ENCODE measurements at regions of chr6 and their contacts with region 1.

Region 1: DNA sequence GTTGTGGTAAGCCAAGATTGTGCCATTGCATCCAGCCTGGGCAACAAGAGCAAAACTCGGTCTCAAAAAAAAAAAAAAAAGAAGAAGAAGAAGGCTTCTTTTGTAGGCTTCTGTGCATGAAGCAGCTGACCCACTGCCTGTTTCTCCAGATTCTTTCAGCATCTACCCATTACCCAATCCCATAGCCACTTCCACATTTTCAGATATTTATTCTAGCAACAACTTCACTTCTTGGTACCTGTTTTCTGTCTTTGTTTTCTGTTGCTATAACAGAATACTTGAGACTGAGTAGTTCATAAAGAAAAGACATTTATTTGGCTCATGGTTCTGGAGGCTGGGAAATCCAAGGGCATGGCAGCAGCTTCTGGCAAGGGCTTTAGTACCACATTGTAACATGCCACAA is 95.3 kb upstream of the SGK1 start:
- DNase-seq: no peak
- H3K4me3 ChIP-seq: no peak overlapping the region
- H3K27ac ChIP-seq: no peak overlapping the region
- H3K4me1 ChIP-seq: no peaks in the 10 kb centered on the region
- H3K27me3 ChIP-seq: no peaks in the 10 kb centered on the region
- CTCF ChIP-seq: no peak
- POLR2A ChIP-seq: no peak

Region 2: GRCh38 chr6:134317471-134318131 is 95.6 kb before region 1 on chr6 and contains the start of gene SGK1:
- CTCF ChIA-PET with region 1: no interaction called
- POLR2A ChIA-PET with region 1: no interaction called
- dilution Hi-C with region 1: no loop called
- intact Hi-C with region 1: loop called (anchors 5 kb)
- DNase-seq: peak; percentile 29
- H3K4me3 ChIP-seq: peak within 1 kb of the TSS; percentile 45 to 64 (median 53)
- H3K27ac ChIP-seq: no peak within 1 kb of the TSS
- H3K4me1 ChIP-seq: peaks cover 6% of the 10 kb centered on the region
- H3K27me3 ChIP-seq: no peaks in the 10 kb centered on the region
- CTCF ChIP-seq: no peak
- POLR2A ChIP-seq: no peak
- total RNA-seq, gene SGK1: 121 and 150 TPM in 2 replicates